Heart right ventricle (tissue), 16 donors: ENCODE measurements at regions of chrX and their contacts with region 1.

Region 1: GRCh38 chrX:115642895-115643530 is 82.0 kb downstream of the PLS3 start:
- DNase-seq: peak in 1 of 2 donors; percentile 17
- ATAC-seq: peak in 2 of 8 donors; percentile 55 to 69
- H3K4me3 ChIP-seq: no peak overlapping the region
- H3K27ac ChIP-seq: peak overlapping the region in 6 of 10 donors; percentile 1 to 62 (median 44)
- H3K4me1 ChIP-seq: peaks cover 0 to 34% (median 2%) of the 10 kb centered on the region in 9 donors
- H3K27me3 ChIP-seq: peaks cover 0 to 66% (median 0%) of the 10 kb centered on the region in 7 donors
- CTCF ChIP-seq: peak; percentile 76 to 99 (median 82)

Region 2: DNA sequence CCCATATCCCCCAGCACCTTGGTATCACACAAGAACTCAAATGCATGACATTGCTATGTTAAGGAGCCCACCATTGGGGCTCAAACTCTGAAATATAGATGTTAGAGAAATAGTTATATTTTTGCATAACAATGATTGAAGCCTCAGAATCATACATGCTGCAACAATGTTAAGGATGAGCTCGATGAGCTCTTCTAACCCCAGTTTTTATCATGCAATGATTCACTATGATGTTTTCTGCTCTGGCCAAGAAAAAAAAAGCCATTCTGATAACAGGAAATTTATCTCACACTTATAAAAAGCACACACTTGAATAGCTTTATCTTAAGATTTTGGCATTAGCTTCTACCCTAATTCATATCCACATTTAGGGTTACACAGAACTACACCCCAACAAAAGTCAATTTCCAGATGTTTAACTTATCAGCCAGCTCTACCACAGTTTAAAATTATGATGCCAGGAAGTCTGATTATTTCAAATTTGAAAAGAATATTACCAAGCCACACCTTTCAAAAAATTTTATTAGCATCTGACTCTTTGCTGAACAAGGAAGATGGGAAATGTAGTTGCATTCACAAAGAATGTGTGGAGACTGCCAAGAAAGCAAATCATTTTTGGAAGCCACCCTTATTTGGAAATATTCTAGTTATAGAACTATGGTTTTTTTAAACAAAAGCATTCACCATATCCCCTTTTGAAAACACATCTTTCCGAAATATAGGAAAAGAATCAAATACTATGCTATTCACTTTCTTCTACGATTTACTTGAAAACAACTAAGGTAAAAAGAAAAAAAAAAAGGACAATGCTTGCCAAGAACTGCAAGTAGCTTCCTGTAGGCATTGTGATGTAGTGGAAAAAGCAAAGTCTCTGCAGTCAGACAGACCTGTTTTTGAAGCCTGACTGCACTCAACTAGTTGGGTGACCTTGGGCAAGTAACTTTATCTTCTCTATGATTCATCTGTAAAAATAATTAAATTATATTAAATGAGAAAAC is 182.8 kb before region 1 on chrX:
- intact Hi-C with region 1: loop called in 2 of 10 experiments (anchors 5 to 10 kb)
- DNase-seq: peak in 1 of 2 donors; percentile 14
- ATAC-seq: peak in 7 of 8 donors; percentile 28 to 91 (median 77)
- H3K4me3 ChIP-seq: no peak overlapping the region
- H3K27ac ChIP-seq: peak overlapping the region in 8 of 10 donors; percentile 2 to 67 (median 28)
- H3K4me1 ChIP-seq: peaks cover 0 to 38% (median 7%) of the 10 kb centered on the region in 9 donors
- H3K27me3 ChIP-seq: peaks cover 0 to 58% (median 0%) of the 10 kb centered on the region in 7 donors
- CTCF ChIP-seq: no peak